ENCODE measurements at regions of chr10 and their contacts with region 1.

Region 1: GRCh38 chr10:117107238-117107637 is 30.8 kb downstream of the VAX1 start:
- DNase-seq: no peak
- ATAC-seq: no peak
- H3K4me3 ChIP-seq: no peak overlapping the region
- H3K27ac ChIP-seq: no peak overlapping the region
- H3K4me1 ChIP-seq: no peaks in the 10 kb centered on the region
- H3K27me3 ChIP-seq: no peaks in the 10 kb centered on the region
- CTCF ChIP-seq: no peak
- POLR2A ChIP-seq: no peak
- RAD21 ChIP-seq: no peak

Region 2: GRCh38 chr10:116331815-116332214 is 775.4 kb before region 1 on chr10:
- CTCF ChIA-PET with region 1: no interaction called
- POLR2A ChIA-PET with region 1: no interaction called
- dilution Hi-C with region 1: no loop called
- in situ Hi-C with region 1: no loop called
- intact Hi-C with region 1: no loop called
- DNase-seq: no peak
- ATAC-seq: no peak
- H3K4me3 ChIP-seq: no peak overlapping the region
- H3K27ac ChIP-seq: no peak overlapping the region
- H3K4me1 ChIP-seq: no peaks in the 10 kb centered on the region
- H3K27me3 ChIP-seq: no peaks in the 10 kb centered on the region
- CTCF ChIP-seq: no peak
- POLR2A ChIP-seq: no peak
- RAD21 ChIP-seq: no peak

Region 3: GRCh38 chr10:117152668-117153067 is 45.4 kb after region 1 on chr10:
- CTCF ChIA-PET with region 1: no interaction called
- POLR2A ChIA-PET with region 1: no interaction called
- dilution Hi-C with region 1: no loop called
- in situ Hi-C with region 1: no loop called
- intact Hi-C with region 1: no loop called
- DNase-seq: no peak
- ATAC-seq: no peak
- H3K4me3 ChIP-seq: no peak overlapping the region
- H3K27ac ChIP-seq: no peak overlapping the region
- H3K4me1 ChIP-seq: no peaks in the 10 kb centered on the region
- H3K27me3 ChIP-seq: peaks cover 2% of the 10 kb centered on the region
- CTCF ChIP-seq: no peak
- POLR2A ChIP-seq: no peak
- RAD21 ChIP-seq: no peak

Region 4: GRCh38 chr10:117167789-117168674 is 60.8 kb after region 1 on chr10:
- CTCF ChIA-PET with region 1: no interaction called
- POLR2A ChIA-PET with region 1: no interaction called
- dilution Hi-C with region 1: no loop called
- in situ Hi-C with region 1: no loop called
- intact Hi-C with region 1: no loop called
- DNase-seq: peak; percentile 10
- ATAC-seq: peak; percentile 90
- H3K4me3 ChIP-seq: no peak overlapping the region
- H3K27ac ChIP-seq: no peak overlapping the region
- H3K4me1 ChIP-seq: no peaks in the 10 kb centered on the region
- H3K27me3 ChIP-seq: peaks cover 78% of the 10 kb centered on the region
- CTCF ChIP-seq: peak; percentile 63
- POLR2A ChIP-seq: no peak
- RAD21 ChIP-seq: peak; percentile 40

Region 5: DNA sequence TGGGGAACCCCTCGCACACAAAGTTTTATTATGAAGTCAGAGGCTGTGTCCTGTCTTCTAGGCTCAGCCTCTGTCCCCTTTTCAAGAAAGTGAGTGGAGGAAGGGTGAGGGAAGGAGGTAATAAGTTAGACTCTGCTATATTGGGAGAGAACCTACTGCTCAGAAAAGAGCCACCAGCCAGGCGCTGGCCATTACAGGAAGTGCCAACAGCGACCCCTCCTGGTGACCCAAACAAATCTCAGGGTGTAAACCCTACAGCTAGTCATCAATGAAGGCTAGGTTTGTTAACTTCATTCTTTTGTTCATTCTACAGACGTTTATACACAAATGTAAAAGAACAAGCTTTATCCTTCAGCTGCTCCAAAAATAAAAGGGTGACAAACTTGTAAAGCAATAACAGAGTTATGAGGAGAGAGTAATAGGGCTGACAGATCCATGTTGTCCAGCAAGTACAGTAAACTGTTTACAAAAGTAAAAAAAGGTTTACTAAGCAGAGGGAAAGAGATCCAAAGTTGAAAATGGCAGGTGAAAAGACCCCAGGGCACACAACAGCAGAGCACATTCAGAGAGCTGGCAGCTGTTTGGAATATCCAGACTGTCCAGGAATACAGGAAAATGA is 1152.2 kb after region 1 on chr10:
- CTCF ChIA-PET with region 1: no interaction called
- POLR2A ChIA-PET with region 1: interaction called, 14 read pairs
- dilution Hi-C with region 1: no loop called
- in situ Hi-C with region 1: no loop called
- intact Hi-C with region 1: no loop called
- DNase-seq: peak; percentile 6
- ATAC-seq: no peak; the same call in 1 of the 2 replicates
- H3K4me3 ChIP-seq: no peak overlapping the region
- H3K27ac ChIP-seq: no peak overlapping the region
- H3K4me1 ChIP-seq: no peaks in the 10 kb centered on the region
- H3K27me3 ChIP-seq: 0 out of 2 replicates have a peak, but pooled peaks cover 2% of the 10 kb centered on the region
- CTCF ChIP-seq: peak; percentile 47
- POLR2A ChIP-seq: no peak
- RAD21 ChIP-seq: peak; percentile 26

Measured in IMR-90 (cell line).